Panc1 (cell line): ENCODE measurements at regions of chr7 and their contacts with region 1.

Region 1: DNA sequence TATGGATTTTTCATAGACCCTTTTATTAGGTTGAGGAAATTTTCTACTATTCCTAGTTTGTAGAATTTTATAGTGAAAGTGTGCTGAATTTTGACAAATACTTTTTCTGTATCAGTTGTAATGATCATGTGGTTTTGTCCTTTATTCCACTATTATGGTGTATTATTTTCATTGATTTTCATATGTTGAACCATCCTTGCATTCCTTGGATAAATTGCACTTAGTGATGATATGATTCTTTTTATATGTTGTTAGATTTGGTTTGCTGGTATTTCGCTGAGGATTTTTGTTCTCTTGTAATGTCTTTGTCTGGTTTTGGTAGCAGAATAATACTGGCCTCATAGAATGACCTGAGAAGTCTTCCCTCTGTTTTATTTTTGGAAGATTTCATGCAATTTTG is 140.6 kb upstream of the CDK6 start:
- DNase-seq: no peak
- ATAC-seq: no peak
- H3K4me3 ChIP-seq: no peak overlapping the region
- H3K27ac ChIP-seq: no peak overlapping the region
- H3K4me1 ChIP-seq: no peaks in the 10 kb centered on the region
- H3K27me3 ChIP-seq: no peaks in the 10 kb centered on the region
- CTCF ChIP-seq: no peak

Region 2: GRCh38 chr7:93015779-93016481 is 39.0 kb after region 1 on chr7:
- CTCF ChIA-PET with region 1: no interaction called
- POLR2A ChIA-PET with region 1: interaction called, 13 read pairs
- in situ Hi-C with region 1: no loop called
- intact Hi-C with region 1: no loop called
- DNase-seq: no peak
- ATAC-seq: no peak
- H3K4me3 ChIP-seq: no peak overlapping the region
- H3K27ac ChIP-seq: peak overlapping the region; percentile 29; the same call in 1 of the 2 replicates
- H3K4me1 ChIP-seq: no peaks in the 10 kb centered on the region
- H3K27me3 ChIP-seq: no peaks in the 10 kb centered on the region
- CTCF ChIP-seq: no peak

Region 3: GRCh38 chr7:93298671-93299070 is 321.7 kb after region 1 on chr7:
- CTCF ChIA-PET with region 1: no interaction called
- POLR2A ChIA-PET with region 1: no interaction called
- in situ Hi-C with region 1: no loop called
- intact Hi-C with region 1: no loop called
- DNase-seq: no peak
- ATAC-seq: no peak
- H3K4me3 ChIP-seq: no peak overlapping the region
- H3K27ac ChIP-seq: no peak overlapping the region
- H3K4me1 ChIP-seq: no peaks in the 10 kb centered on the region
- H3K27me3 ChIP-seq: no peaks in the 10 kb centered on the region
- CTCF ChIP-seq: no peak